ENCODE measurements at regions of chr16 and their contacts with region 1.

Region 1: GRCh38 chr16:47110939-47111338 is 32.8 kb downstream of the NETO2 start:
- DNase-seq: no peak
- ATAC-seq: no peak
- H3K4me3 ChIP-seq: no peak overlapping the region
- H3K4me3 Mint-ChIP-seq: no peak overlapping the region
- H3K27ac ChIP-seq: no peak overlapping the region
- H3K27ac Mint-ChIP-seq: no peak overlapping the region
- H3K4me1 ChIP-seq: no peaks in the 10 kb centered on the region
- H3K4me1 Mint-ChIP-seq: no peaks in the 10 kb centered on the region
- H3K27me3 ChIP-seq: no peaks in the 10 kb centered on the region
- H3K27me3 Mint-ChIP-seq: no peaks in the 10 kb centered on the region
- CTCF ChIP-seq: no peak

Region 2: GRCh38 chr16:47082099-47082865 is 28.7 kb before region 1 on chr16:
- CTCF ChIA-PET with region 1: interaction called, 4 read pairs
- POLR2A ChIA-PET with region 1: interaction called, 10 read pairs
- intact Hi-C with region 1: no loop called
- DNase-seq: no peak
- ATAC-seq: no peak
- H3K4me3 ChIP-seq: no peak overlapping the region
- H3K4me3 Mint-ChIP-seq: no peak overlapping the region
- H3K27ac ChIP-seq: no peak overlapping the region
- H3K27ac Mint-ChIP-seq: no peak overlapping the region
- H3K4me1 ChIP-seq: no peaks in the 10 kb centered on the region
- H3K4me1 Mint-ChIP-seq: no peaks in the 10 kb centered on the region
- H3K27me3 ChIP-seq: no peaks in the 10 kb centered on the region
- H3K27me3 Mint-ChIP-seq: no peaks in the 10 kb centered on the region
- CTCF ChIP-seq: no peak

Region 3: GRCh38 chr16:47125757-47126156 is 14.8 kb after region 1 on chr16:
- CTCF ChIA-PET with region 1: no interaction called
- POLR2A ChIA-PET with region 1: no interaction called
- intact Hi-C with region 1: no loop called
- DNase-seq: no peak
- ATAC-seq: no peak
- H3K4me3 ChIP-seq: no peak overlapping the region
- H3K4me3 Mint-ChIP-seq: no peak overlapping the region
- H3K27ac ChIP-seq: no peak overlapping the region
- H3K27ac Mint-ChIP-seq: no peak overlapping the region
- H3K4me1 ChIP-seq: no peaks in the 10 kb centered on the region
- H3K4me1 Mint-ChIP-seq: no peaks in the 10 kb centered on the region
- H3K27me3 ChIP-seq: no peaks in the 10 kb centered on the region
- H3K27me3 Mint-ChIP-seq: no peaks in the 10 kb centered on the region
- CTCF ChIP-seq: no peak

Region 4: GRCh38 chr16:47162670-47163420 is 51.9 kb after region 1 on chr16:
- CTCF ChIA-PET with region 1: no interaction called
- POLR2A ChIA-PET with region 1: no interaction called
- intact Hi-C with region 1: loop called (anchors 10 kb)
- DNase-seq: no peak
- ATAC-seq: no peak
- H3K4me3 ChIP-seq: no peak overlapping the region
- H3K4me3 Mint-ChIP-seq: no peak overlapping the region
- H3K27ac ChIP-seq: no peak overlapping the region
- H3K27ac Mint-ChIP-seq: no peak overlapping the region
- H3K4me1 ChIP-seq: no peaks in the 10 kb centered on the region
- H3K4me1 Mint-ChIP-seq: no peaks in the 10 kb centered on the region
- H3K27me3 ChIP-seq: no peaks in the 10 kb centered on the region
- H3K27me3 Mint-ChIP-seq: no peaks in the 10 kb centered on the region
- CTCF ChIP-seq: no peak

Region 5: DNA sequence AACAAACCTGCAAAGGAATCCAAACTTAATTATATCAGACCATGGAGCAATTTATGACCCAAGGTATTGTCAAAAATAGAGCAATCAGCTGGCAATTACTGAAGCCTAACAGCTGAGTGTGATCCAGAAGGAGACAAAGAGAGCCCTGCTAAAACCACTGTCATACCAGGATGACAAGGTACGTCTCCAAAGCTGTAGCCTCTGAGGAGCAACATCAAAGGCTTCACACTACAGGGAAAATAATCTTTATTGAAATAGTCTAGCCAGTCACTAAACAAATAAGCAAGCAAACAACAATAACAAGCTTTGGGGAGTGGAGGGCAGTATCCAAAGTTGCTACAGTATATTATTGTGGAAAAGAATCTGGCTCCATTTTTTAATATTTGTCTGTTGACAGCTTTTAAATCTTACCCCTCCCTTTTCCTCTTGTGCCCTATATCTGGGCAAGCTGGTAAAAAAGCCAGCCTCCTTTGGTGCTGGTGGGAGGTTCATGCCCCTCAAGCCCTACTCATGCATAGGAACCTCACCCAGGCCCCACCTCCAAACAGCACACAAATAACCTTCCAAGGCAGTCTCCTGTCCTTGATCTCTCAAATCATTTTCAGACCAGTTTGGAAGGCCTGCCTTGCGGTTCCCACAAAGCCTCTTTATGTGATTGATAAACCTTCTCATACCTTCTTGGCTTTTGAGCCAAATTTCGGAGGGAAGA is 276.2 kb after region 1 on chr16:
- CTCF ChIA-PET with region 1: no interaction called
- POLR2A ChIA-PET with region 1: no interaction called
- intact Hi-C with region 1: no loop called
- DNase-seq: no peak
- ATAC-seq: no peak
- H3K4me3 ChIP-seq: no peak overlapping the region
- H3K4me3 Mint-ChIP-seq: no peak overlapping the region
- H3K27ac ChIP-seq: no peak overlapping the region
- H3K27ac Mint-ChIP-seq: no peak overlapping the region
- H3K4me1 ChIP-seq: peaks cover 4 to 6% of the 10 kb centered on the region in 2 donors
- H3K4me1 Mint-ChIP-seq: peaks cover 4% of the 10 kb centered on the region
- H3K27me3 ChIP-seq: no peaks in the 10 kb centered on the region
- H3K27me3 Mint-ChIP-seq: no peaks in the 10 kb centered on the region
- CTCF ChIP-seq: no peak

Measured in B cell (primary cell).